Left ventricle myocardium inferior (tissue), 1 donor: ENCODE measurements at regions of chr11 and their contacts with region 1.

Region 1: DNA sequence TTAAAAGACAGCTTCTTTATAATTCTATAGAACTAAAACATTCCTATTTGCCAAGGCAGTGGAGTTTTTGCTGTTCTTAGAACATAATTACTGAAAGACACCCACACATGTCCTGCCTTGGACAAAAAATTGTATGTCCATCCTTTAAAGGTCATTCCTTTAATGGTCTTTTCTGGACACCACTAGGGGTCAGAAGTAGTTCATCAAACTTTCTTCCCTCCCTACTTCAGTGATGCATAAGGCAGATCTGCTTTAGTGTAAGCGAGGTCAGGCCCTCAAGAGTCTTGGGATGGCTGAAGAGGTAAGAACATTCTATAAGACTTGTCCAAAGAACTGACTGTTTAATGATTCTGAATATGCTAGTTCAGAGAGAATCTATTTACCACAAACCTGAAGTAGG is 4.3 kb upstream of the OR51V1 start:
- DNase-seq: no peak
- H3K4me3 ChIP-seq: no peak overlapping the region
- H3K27ac ChIP-seq: no peak overlapping the region
- H3K4me1 ChIP-seq: no peaks in the 10 kb centered on the region
- H3K27me3 ChIP-seq: peaks cover 4% of the 10 kb centered on the region
- CTCF ChIP-seq: peak; percentile 56

Region 2: DNA sequence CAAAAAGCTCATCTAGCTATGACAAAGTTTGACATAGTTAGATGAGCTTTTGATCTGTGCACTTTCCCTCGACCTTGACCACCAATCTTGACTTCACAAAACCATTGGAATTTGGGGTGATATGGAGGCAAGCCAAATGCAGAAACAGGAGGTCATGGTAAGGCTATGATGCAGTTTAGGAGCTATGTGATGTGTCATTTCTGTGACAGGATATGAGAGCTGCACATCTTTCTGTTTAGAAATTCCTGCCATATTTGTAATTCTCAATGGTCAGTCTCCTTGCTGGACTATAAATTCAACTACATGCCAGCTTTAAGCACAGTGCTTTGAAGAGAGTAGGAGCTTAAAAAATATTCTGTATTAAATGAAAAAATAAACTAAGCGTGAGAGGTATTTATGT is 159.4 kb after region 1 on chr11:
- intact Hi-C with region 1: no loop called
- DNase-seq: no peak
- H3K4me3 ChIP-seq: no peak overlapping the region
- H3K27ac ChIP-seq: no peak overlapping the region
- H3K4me1 ChIP-seq: peaks cover 24% of the 10 kb centered on the region
- H3K27me3 ChIP-seq: no peaks in the 10 kb centered on the region
- CTCF ChIP-seq: no peak

Region 3: DNA sequence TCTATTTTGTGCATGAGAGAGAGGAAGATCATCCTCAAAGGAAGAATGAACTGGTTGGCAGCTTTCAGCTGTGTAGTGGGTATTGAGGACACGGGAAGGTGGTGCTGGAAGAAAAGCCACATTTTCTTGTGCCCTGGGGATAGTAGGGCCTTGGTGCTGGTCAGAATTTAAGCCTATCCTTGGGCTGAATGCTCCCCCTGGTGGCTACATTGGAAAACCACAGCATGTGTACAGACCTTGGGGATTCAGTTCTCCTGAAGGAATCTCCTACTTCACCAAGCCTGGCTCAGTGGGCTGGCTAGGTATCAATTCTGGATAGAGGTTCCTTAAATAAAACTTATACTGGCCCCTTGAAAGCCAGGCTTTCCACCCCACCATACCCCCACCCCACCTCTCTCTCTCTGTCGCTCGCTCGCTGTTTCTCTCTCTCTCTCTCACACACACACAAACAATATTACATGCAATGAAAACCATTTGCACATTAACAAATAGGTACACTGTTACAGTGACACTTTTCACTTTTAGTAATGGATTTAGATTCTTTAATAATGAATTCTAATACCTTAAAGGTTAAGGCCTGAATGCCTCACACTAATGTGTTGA is 176.1 kb after region 1 on chr11:
- intact Hi-C with region 1: loop called (anchors 2 kb)
- DNase-seq: peak; percentile 19
- H3K4me3 ChIP-seq: no peak overlapping the region
- H3K27ac ChIP-seq: no peak overlapping the region
- H3K4me1 ChIP-seq: no peaks in the 10 kb centered on the region
- H3K27me3 ChIP-seq: no peaks in the 10 kb centered on the region
- CTCF ChIP-seq: peak; percentile 73

Region 4: GRCh38 chr11:5514841-5515240 is 310.1 kb after region 1 on chr11:
- intact Hi-C with region 1: no loop called
- DNase-seq: no peak
- H3K4me3 ChIP-seq: no peak overlapping the region
- H3K27ac ChIP-seq: no peak overlapping the region
- H3K4me1 ChIP-seq: no peaks in the 10 kb centered on the region
- H3K27me3 ChIP-seq: no peaks in the 10 kb centered on the region
- CTCF ChIP-seq: no peak